BJ (cell line): ENCODE measurements at regions of chrX and their contacts with region 1.

Region 1: GRCh38 chrX:129622757-129623341 is 31.9 kb downstream of the APLN start:
- DNase-seq: no peak
- H3K4me3 ChIP-seq: no peak overlapping the region
- H3K27me3 ChIP-seq: no peaks in the 10 kb centered on the region
- CTCF ChIP-seq: no peak

Region 2: GRCh38 chrX:129637217-129638109 is 14.6 kb after region 1 on chrX:
- CTCF ChIA-PET with region 1: interaction called, 18 read pairs
- POLR2A ChIA-PET with region 1: no interaction called
- DNase-seq: no peak
- H3K4me3 ChIP-seq: no peak overlapping the region
- H3K27me3 ChIP-seq: peaks cover 2% of the 10 kb centered on the region; the same call in 1 of the 2 replicates
- CTCF ChIP-seq: peak; percentile 86